PC-9 (cell line): ENCODE measurements at regions of chr4 and their contacts with region 1.

Region 1: DNA sequence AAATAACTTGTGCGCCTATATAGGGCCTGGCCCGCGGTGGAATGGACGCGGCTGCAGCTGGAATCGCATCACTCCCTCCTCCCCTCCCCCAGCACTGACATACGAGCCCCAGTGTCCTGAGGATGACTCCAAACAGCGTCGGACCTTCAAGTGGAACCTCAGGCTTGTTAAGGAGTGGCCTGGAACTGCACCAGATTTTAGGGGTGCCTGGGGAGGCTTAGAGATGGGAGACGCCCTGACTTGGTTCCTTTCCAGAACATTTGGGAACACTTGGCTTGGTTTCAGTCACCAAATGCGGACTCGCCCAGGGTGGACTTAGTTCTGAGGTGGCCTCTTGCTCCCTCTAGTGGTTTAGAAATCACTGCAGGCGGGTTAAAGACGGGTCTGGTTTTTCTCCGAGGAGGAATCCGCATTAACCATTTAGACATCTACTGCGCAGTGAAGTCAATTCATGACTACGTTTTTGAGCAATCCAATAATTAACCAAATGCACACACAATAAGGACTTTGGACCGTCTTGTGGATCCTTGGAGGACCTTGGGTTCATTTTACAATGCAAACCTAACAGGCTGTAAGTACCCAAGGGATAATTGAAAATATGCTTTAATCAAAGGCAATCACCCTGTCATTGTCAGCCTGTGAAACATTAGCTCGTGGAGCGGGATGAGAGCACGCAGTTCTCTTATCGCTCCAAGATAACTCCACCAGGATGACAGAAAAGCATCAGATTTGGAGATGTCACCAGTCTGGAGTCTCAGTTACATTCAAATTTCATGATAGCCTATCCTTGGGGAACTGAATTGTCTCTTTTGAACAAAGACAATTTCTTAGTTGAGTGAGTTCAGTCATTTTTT is 11.2 kb upstream of the PDGFRA start:
- DNase-seq: peak; percentile 48 to 61
- H3K4me3 ChIP-seq: peak overlapping the region; percentile 49; the same call in 1 of the 2 replicates
- H3K27ac ChIP-seq: no peak overlapping the region
- H3K4me1 ChIP-seq: no peaks in the 10 kb centered on the region; the same call in 1 of the 2 replicates
- H3K27me3 ChIP-seq: no peaks in the 10 kb centered on the region
- CTCF ChIP-seq: peak; percentile 88

Region 2: DNA sequence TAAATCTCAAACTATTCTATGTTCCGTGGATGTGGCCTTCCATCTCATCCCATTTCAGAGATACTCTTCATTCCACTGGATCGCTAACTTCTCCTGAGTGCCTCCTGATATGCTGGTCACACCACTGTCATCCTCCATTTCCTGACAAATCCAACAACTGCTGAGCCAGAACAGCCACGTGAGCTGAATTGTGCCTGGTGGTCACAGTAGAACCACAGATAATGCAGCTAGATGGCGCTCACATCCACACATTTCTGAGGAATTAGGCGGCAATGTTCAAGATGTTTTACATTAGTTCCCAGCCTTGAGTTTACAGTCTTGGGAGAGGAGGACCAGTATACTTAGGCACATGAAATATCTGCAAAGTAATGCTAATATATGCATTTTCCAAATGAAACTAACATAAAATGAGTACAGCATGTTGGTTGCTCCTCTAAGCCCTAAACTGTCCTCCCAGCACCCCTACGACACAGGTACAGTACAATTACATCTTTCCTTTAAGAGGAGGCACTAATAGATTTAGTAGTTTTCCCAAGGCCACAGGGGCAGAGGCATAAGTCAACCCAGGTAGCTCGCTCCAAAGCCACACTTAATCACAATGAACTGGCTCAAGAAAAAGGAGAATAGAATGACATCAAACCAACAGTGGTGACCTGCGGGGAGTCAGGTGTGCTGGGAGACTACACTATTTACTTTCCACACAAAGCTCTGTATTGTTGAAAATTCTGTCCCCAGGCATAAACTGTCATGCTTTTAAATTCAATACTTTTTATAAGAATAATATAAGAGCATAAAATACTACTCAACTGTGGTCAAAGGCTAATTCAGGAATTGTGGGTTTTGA is 287.7 kb before region 1 on chr4:
- CTCF ChIA-PET with region 1: interaction called, 3 read pairs
- POLR2A ChIA-PET with region 1: no interaction called
- intact Hi-C with region 1: loop called (anchors 1 kb)
- DNase-seq: peak; percentile 42 to 47
- H3K4me3 ChIP-seq: no peak overlapping the region
- H3K27ac ChIP-seq: no peak overlapping the region
- H3K4me1 ChIP-seq: peaks cover 13% of the 10 kb centered on the region; the same call in 1 of the 2 replicates
- H3K27me3 ChIP-seq: no peaks in the 10 kb centered on the region
- CTCF ChIP-seq: peak; percentile 76

Region 3: GRCh38 chr4:54091637-54092404 is 126.0 kb before region 1 on chr4:
- CTCF ChIA-PET with region 1: no interaction called
- POLR2A ChIA-PET with region 1: no interaction called
- intact Hi-C with region 1: loop called (anchors 10 kb)
- DNase-seq: peak in 1 of 2 experiments; percentile 44
- H3K4me3 ChIP-seq: peak overlapping the region; percentile 69
- H3K27ac ChIP-seq: no peak overlapping the region
- H3K4me1 ChIP-seq: peaks cover 3% of the 10 kb centered on the region; the same call in 1 of the 2 replicates
- H3K27me3 ChIP-seq: no peaks in the 10 kb centered on the region
- CTCF ChIP-seq: no peak

Region 4: GRCh38 chr4:54855191-54855854 is 637.5 kb after region 1 on chr4:
- CTCF ChIA-PET with region 1: no interaction called
- POLR2A ChIA-PET with region 1: no interaction called
- intact Hi-C with region 1: no loop called
- DNase-seq: no peak
- H3K4me3 ChIP-seq: no peak overlapping the region
- H3K27ac ChIP-seq: no peak overlapping the region
- H3K4me1 ChIP-seq: no peaks in the 10 kb centered on the region
- H3K27me3 ChIP-seq: no peaks in the 10 kb centered on the region
- CTCF ChIP-seq: no peak